ENCODE measurements at regions of chr4 and their contacts with region 1.

Region 1: GRCh38 chr4:108060164-108060563 is 70.5 kb downstream of the HADH start:
- DNase-seq: no peak
- ATAC-seq: peak in 1 of 2 donors; percentile 11
- H3K4me3 Mint-ChIP-seq: peak overlapping the region in 4 of 10 donors; percentile 4 to 42 (median 30)
- H3K27ac Mint-ChIP-seq: peak overlapping the region; percentile 78 to 95 (median 90)
- H3K4me1 Mint-ChIP-seq: peaks cover 49 to 90% (median 87%) of the 10 kb centered on the region in 4 donors
- H3K27me3 Mint-ChIP-seq: peaks cover 0 to 2% (median 0%) of the 10 kb centered on the region in 5 donors

Region 2: DNA sequence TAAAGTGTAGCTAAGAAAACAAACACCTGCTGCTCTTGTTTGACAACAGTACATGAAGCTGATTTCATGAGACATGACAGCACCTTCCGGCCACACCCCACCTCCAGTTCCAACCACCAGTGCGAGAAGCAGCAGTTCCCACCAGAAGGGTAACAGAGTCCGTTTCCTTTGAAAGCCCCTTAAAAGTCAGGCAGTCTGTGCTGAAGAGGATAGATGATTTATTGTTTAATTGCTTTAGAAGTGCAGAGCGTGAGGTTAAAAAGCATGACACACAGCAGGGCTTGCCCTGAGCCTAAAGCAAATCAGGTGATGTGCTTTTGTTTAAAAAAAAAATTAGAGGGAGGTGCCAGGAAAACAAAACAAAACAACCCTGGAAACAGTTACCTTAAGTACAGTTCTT is 12.1 kb after region 1 on chr4:
- POLR2A ChIA-PET with region 1: interaction called, 22 read pairs
- DNase-seq: peak; percentile 63 to 93 (median 86)
- ATAC-seq: peak; percentile 84 to 90
- H3K4me3 Mint-ChIP-seq: peak overlapping the region; percentile 51 to 83 (median 72)
- H3K27ac Mint-ChIP-seq: peak overlapping the region; percentile 87 to 99 (median 97)
- H3K4me1 Mint-ChIP-seq: peaks cover 37 to 86% (median 78%) of the 10 kb centered on the region in 4 donors
- H3K27me3 Mint-ChIP-seq: no peaks in the 10 kb centered on the region